Vagina (tissue), 2 donors: ENCODE measurements at regions of chr3 and their contacts with region 1.

Region 1: DNA sequence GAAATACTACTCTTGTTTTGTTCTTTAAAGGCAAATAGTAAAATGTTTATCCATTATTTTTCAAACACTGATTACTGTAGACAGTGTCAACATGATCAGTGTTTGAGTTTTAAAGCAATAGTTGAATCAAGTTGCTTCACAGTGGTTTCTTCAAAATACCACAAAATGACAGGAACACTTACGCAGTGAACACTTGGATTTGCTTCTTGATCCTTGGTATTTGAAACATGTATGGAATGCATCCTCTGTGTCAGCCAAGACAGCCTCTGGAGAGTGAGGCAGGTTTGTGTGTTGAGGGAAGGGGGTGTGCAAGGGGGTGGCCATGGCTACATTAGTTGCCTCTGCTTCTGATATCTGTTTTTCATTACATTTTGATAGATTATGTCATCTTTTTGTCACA is 413.0 kb downstream of the RBMS3 start:
- DNase-seq: no peak
- H3K4me3 ChIP-seq: no peak overlapping the region
- H3K27ac ChIP-seq: no peak overlapping the region
- H3K4me1 ChIP-seq: peaks cover 28% of the 10 kb centered on the region
- H3K27me3 ChIP-seq: no peaks in the 10 kb centered on the region
- CTCF ChIP-seq: no peak
- POLR2A ChIP-seq: no peak

Region 2: GRCh38 chr3:29515451-29515850 is 178.4 kb before region 1 on chr3:
- intact Hi-C with region 1: loop called (anchors 10 kb)
- DNase-seq: no peak
- H3K4me3 ChIP-seq: no peak overlapping the region
- H3K27ac ChIP-seq: no peak overlapping the region
- H3K4me1 ChIP-seq: peaks cover 45% of the 10 kb centered on the region
- H3K27me3 ChIP-seq: no peaks in the 10 kb centered on the region
- CTCF ChIP-seq: no peak
- POLR2A ChIP-seq: no peak

Region 3: GRCh38 chr3:29627136-29628117 is 66.4 kb before region 1 on chr3:
- intact Hi-C with region 1: no loop called
- DNase-seq: no peak
- H3K4me3 ChIP-seq: no peak overlapping the region
- H3K27ac ChIP-seq: no peak overlapping the region
- H3K4me1 ChIP-seq: no peaks in the 10 kb centered on the region
- H3K27me3 ChIP-seq: no peaks in the 10 kb centered on the region
- CTCF ChIP-seq: no peak
- POLR2A ChIP-seq: no peak